Activated CD8-positive, alpha-beta T cell treated with anti-CD3 and anti-CD28 coated beads, Interleukin-2, amount 10 ng/mL, durations not matched to agents 7 days and 5 days (primary cell): ENCODE measurements at regions of chr5 and their contacts with region 1.

Region 1: GRCh38 chr5:107571621-107572536 is 98.9 kb downstream of the EFNA5 start:
- DNase-seq: peak; percentile 90
- ATAC-seq: peak; percentile 99
- H3K4me3 Mint-ChIP-seq: peak overlapping the region; percentile 71
- H3K27ac Mint-ChIP-seq: no peak overlapping the region
- H3K4me1 Mint-ChIP-seq: peaks cover 19% of the 10 kb centered on the region
- H3K27me3 Mint-ChIP-seq: peaks cover 25% of the 10 kb centered on the region

Region 2: DNA sequence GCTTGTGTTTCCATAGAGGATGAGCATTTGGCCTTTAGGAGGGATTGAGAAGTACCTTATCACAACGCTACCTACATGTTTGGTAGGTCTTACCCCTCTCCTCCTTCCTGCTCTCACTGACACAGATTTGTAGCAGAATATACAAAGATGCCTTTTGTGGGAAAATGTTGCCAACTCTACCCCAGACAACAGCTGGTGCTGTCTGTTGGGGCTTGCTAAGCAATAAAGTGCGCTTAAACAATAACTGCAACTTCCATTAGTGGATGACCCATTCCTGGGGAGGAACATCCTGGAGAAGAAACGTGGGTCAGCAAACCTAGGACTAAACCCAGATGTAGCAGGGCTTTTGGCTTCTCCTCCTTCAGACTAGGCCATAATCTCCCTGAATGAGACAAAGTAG is 75.4 kb before region 1 on chr5:
- CTCF ChIA-PET with region 1: no interaction called
- POLR2A ChIA-PET with region 1: no interaction called
- DNase-seq: no peak
- ATAC-seq: no peak
- H3K4me3 Mint-ChIP-seq: no peak overlapping the region
- H3K27ac Mint-ChIP-seq: no peak overlapping the region
- H3K4me1 Mint-ChIP-seq: no peaks in the 10 kb centered on the region
- H3K27me3 Mint-ChIP-seq: peaks cover 4% of the 10 kb centered on the region

Region 3: DNA sequence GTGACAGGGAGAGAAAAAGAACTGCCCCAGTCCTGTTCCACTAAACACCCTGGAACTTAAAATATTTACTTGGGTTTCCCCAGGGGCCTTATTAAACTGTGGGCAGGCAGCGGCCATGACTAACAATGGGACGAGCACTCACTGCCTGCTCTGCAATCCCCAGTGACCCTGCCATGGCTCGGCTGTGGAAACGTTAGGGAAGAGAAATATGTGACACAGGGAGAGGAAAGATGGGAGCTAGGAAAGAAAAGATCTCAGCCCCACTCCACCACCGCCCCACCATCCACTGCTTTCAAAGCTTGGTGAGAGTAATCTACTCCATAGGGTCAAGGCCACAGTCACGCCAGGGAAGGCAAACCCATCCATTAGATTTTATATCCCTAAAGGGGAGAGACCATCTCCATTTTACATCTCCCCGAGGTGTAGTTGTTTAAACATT is 18.7 kb before region 1 on chr5:
- CTCF ChIA-PET with region 1: interaction called, 10 read pairs
- POLR2A ChIA-PET with region 1: no interaction called
- DNase-seq: no peak
- ATAC-seq: no peak
- H3K4me3 Mint-ChIP-seq: no peak overlapping the region
- H3K27ac Mint-ChIP-seq: no peak overlapping the region
- H3K4me1 Mint-ChIP-seq: no peaks in the 10 kb centered on the region
- H3K27me3 Mint-ChIP-seq: peaks cover 6% of the 10 kb centered on the region

Region 4: GRCh38 chr5:107561838-107562237 is 10.0 kb before region 1 on chr5:
- CTCF ChIA-PET with region 1: interaction called, 14 read pairs
- POLR2A ChIA-PET with region 1: no interaction called
- DNase-seq: no peak
- ATAC-seq: no peak
- H3K4me3 Mint-ChIP-seq: no peak overlapping the region
- H3K27ac Mint-ChIP-seq: no peak overlapping the region
- H3K4me1 Mint-ChIP-seq: no peaks in the 10 kb centered on the region
- H3K27me3 Mint-ChIP-seq: peaks cover 6% of the 10 kb centered on the region

Region 5: GRCh38 chr5:107589520-107590193 is 17.8 kb after region 1 on chr5:
- CTCF ChIA-PET with region 1: interaction called, 13 read pairs
- POLR2A ChIA-PET with region 1: no interaction called
- DNase-seq: no peak
- ATAC-seq: no peak
- H3K4me3 Mint-ChIP-seq: no peak overlapping the region
- H3K27ac Mint-ChIP-seq: no peak overlapping the region
- H3K4me1 Mint-ChIP-seq: no peaks in the 10 kb centered on the region
- H3K27me3 Mint-ChIP-seq: peaks cover 2% of the 10 kb centered on the region